Endothelial cell of umbilical vein (primary cell): ENCODE measurements at regions of chr7 and their contacts with region 1.

Region 1: DNA sequence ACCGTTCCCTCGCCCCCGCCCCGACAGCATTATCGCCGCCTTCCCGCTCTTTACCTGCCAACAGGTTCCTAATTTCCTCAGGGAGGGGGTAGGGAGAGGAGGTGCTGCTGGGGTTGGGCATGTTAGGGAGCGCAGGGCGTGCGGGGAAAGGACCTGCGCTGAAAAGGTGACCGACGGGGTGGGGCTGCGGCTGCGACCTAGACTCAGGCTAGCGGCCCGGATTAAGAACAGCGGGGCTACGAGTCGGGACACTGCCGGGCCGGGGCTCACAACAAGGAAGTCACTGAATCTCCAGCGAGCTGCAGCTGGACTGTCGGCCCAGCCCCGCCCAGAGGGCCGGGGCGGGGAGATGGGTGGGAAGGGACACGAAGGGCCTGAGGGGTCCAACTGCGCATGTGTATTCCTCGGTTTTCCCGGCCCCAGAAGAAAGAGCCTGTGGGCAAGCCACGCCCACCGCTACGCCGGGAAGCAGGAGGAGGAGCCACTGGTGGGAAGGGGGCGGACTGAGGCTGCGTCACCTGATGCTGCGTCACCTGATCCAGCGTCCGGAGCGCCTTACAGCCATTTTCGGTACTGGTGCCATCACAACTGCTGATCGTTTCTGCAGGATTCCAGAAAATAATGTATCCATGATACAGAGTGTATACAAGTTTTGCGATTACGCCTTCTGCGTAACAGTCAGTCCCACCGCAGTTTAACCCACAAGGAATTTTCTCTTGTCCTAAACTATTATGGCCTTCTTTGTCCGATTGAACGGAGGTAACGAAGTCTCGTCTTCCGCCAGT is at the start of gene SKAP2:
- DNase-seq: peak; percentile 99
- H3K4me3 ChIP-seq: peak within 1 kb of the TSS; percentile 59 to 85 (median 72)
- H3K27ac ChIP-seq: peak within 1 kb of the TSS; percentile 90
- H3K4me1 ChIP-seq: peaks cover 15% of the 10 kb centered on the region
- H3K27me3 ChIP-seq: no peaks in the 10 kb centered on the region
- CTCF ChIP-seq: no peak
- POLR2A ChIP-seq: peak; percentile 99
- total RNA-seq, gene SKAP2: 27.6 and 30.5 TPM in 2 replicates

Region 2: DNA sequence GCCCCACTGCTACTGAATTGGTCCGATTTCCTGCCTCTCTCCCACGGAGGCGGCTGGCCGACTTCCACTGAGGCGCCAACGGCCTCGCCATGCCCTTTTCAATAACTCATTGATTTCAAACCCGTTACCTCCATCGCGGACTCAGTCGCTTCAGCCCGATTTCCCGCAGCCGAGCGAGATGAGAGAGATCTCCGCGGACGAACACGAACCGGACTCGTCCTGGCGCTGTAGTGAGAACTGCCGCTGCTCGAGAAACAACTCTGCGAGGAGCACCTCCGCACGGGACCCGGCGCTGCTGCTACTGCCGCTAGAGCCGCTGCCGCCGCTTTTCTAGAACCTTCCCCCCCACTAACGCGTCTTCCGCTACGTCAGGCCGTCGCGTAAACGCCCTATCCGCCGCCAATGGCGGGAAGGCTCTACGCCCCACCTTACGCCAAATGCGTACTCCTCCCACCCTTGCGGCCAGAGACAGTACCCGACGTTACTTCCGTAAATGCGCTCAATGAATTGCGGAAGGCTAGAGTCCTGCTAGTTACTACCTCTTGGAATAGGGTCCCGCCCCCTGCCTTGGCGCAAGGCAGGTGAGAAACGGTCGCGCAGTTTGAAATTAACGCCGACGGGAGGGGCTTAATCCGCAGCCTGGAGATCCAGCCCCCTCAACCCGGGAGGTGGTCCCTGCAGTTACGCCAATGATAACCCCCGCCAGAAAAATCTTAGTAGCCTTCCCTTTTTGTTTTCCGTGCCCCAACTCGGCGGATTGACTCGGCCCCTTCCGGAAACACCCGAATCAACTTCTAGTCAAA is 663.9 kb before region 1 on chr7 and contains the start of gene HNRNPA2B1:
- CTCF ChIA-PET with region 1: no interaction called
- POLR2A ChIA-PET with region 1: no interaction called
- dilution Hi-C with region 1: no loop called
- intact Hi-C with region 1: loop called (anchors 5 kb)
- DNase-seq: peak; percentile 99
- H3K4me3 ChIP-seq: peak within 1 kb of the TSS; percentile 98 to 100 (median 98)
- H3K27ac ChIP-seq: peak within 1 kb of the TSS; percentile 97
- H3K4me1 ChIP-seq: peaks cover 40% of the 10 kb centered on the region
- H3K27me3 ChIP-seq: no peaks in the 10 kb centered on the region
- CTCF ChIP-seq: no peak
- POLR2A ChIP-seq: peak; percentile 100
- total RNA-seq, gene HNRNPA2B1: 703 and 717 TPM in 2 replicates

Region 3: DNA sequence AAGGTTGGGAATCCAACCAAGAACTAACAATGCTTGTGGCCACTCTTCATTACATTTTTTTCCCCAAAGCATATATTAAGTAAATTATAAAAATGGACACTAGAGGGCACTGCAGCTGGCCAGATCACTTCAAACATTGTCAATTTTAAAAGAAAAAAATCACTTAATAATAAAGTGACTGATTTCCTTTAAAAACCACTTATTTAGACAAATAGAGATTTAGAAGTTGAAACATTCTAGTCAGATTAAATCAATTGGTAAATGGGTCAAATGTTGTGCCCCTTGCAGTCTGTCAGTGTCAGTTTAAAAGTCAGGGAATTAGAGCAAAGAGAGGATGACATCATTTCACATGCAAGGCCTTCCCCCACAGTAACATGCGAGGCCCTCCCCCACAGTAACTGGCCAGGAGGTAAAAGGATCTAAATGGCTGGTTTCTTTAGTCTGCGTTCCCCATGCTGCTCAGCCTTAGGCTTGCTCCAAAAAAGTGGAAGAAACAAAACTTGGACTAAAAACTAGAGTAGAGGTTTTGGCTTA is 178.0 kb before region 1 on chr7:
- CTCF ChIA-PET with region 1: interaction called, 5 read pairs
- POLR2A ChIA-PET with region 1: no interaction called
- dilution Hi-C with region 1: no loop called
- intact Hi-C with region 1: loop called (anchors 2 kb)
- DNase-seq: peak; percentile 90
- H3K4me3 ChIP-seq: no peak overlapping the region
- H3K27ac ChIP-seq: peak overlapping the region; percentile 78
- H3K4me1 ChIP-seq: peaks cover 91% of the 10 kb centered on the region
- H3K27me3 ChIP-seq: no peaks in the 10 kb centered on the region
- CTCF ChIP-seq: peak; percentile 23 to 35
- POLR2A ChIP-seq: no peak

Region 4: GRCh38 chr7:26958834-26959233 is 94.3 kb after region 1 on chr7:
- CTCF ChIA-PET with region 1: no interaction called
- POLR2A ChIA-PET with region 1: no interaction called
- dilution Hi-C with region 1: no loop called
- intact Hi-C with region 1: loop called (anchors 2 kb)
- DNase-seq: peak; percentile 79
- H3K4me3 ChIP-seq: no peak overlapping the region
- H3K27ac ChIP-seq: peak overlapping the region; percentile 72
- H3K4me1 ChIP-seq: peaks cover 10% of the 10 kb centered on the region
- H3K27me3 ChIP-seq: no peaks in the 10 kb centered on the region
- CTCF ChIP-seq: no peak
- POLR2A ChIP-seq: no peak

Region 5: GRCh38 chr7:26993816-26994810 is 129.6 kb after region 1 on chr7:
- CTCF ChIA-PET with region 1: no interaction called
- POLR2A ChIA-PET with region 1: no interaction called
- dilution Hi-C with region 1: no loop called
- intact Hi-C with region 1: no loop called
- DNase-seq: no peak
- H3K4me3 ChIP-seq: no peak overlapping the region
- H3K27ac ChIP-seq: no peak overlapping the region
- H3K4me1 ChIP-seq: no peaks in the 10 kb centered on the region
- H3K27me3 ChIP-seq: no peaks in the 10 kb centered on the region
- CTCF ChIP-seq: no peak
- POLR2A ChIP-seq: no peak